GM10248 (cell line): ENCODE measurements at regions of chr5 and their contacts with region 1.

Region 1: GRCh38 chr5:150560401-150561193 is 52.7 kb downstream of the NDST1 start:
- DNase-seq: peak; percentile 80
- CTCF ChIP-seq: peak; percentile 80

Region 2: DNA sequence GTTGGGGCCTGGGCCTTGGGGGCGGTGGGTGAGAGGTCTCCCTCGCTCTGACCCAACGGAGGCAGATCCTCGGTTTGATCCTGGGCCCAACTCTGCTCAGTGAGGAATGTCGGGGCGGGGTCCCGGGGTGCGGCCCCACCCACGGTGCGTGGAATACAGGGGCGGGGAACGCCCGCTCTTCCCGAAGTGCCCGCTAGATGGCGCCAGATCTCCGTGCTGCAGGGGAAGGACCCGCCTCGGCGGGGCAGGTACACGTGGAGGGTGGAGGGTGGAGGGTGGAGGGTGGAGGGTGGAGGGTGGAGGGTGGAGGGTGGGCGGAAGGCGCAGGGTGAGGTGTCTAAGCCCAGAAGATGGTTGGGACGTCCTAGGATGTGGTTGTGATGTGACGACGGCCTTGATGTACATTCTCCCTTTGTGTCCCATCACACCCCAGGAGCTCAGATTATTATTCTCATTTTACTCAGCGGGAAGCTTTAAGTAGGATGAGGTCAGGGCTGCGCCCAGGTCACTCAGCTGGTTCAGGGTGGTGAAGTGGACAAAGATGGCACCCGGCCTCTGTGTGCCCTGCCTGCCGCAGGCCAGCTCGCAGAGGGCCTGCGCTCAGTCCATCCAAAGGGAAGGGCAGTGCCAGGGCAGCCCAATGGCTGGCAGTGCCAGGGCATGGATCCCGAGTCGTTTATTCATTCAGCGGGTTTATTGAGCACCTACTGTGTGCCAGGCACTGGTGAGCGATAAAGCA is 101.6 kb before region 1 on chr5:
- CTCF ChIA-PET with region 1: interaction called, 56 read pairs
- POLR2A ChIA-PET with region 1: no interaction called
- DNase-seq: peak; percentile 84
- CTCF ChIP-seq: peak; percentile 94

Region 3: DNA sequence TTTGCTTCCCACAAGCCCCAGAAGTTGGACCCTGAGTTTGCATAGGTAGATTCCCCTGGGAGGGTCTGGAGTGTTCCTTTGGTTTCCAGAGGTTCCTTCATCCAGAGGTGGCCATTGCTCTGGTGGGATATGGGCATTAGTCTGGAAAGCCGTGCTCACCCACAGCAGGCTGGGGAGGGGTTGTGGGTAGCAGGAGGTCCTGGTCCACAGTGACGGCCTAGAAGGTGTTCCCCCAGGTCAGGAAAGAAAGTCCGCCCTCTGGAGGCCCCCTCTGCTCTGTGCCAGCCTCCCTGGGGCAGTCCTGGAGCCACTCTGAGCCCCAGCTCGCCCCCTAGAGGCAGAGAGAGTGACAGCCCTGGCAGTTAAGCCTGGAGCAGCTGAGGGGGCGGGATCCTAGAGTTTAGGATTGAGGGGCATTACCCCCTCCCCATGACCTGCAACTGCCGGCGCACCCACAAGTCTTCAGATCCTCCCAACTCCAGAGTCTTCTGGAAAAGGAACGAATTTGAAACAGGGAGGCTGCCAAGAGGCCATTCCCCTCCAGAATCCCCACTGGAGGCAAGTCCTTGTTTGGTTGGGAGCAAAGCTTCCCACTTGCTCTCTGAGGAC is 15.9 kb before region 1 on chr5:
- CTCF ChIA-PET with region 1: interaction called, 35 read pairs
- POLR2A ChIA-PET with region 1: no interaction called
- DNase-seq: peak; percentile 95
- CTCF ChIP-seq: peak; percentile 98

Region 4: DNA sequence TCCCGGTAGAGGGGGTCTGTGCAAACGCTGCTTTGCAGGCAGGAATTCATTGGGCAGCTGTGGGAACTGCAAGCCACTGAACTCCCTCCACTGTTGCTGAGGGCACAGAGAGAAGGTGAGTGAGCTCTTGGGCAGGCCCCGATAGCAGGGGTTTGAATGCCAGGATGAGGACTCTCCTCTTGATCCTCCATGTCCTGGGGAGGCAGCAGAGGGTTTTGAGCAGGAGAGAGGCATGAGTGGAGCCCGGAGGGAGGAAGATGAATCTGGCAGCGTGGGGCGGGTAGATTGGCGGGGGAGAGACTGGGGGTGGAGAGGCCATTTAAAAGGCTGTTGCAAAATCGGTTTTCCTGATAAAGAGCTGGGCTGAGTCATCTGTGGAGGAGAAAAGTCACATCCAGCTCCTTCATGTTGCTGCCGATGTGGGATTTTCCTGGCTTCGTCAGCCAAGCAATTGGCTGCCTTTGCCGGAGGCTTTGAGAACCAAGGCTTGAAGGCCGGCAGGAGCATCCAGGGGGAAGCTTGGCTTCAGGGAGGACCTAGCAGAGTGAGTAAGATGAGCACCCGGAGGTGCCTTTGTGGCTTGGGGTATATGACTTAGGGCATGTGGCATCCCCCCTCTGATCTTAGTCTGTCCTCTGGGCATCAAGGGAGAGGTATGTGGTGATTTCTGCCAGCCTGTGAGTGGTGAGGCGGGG is 79.9 kb after region 1 on chr5 and contains the start of gene SYNPO:
- CTCF ChIA-PET with region 1: interaction called, 13 read pairs
- POLR2A ChIA-PET with region 1: no interaction called
- DNase-seq: no peak
- CTCF ChIP-seq: no peak

Region 5: GRCh38 chr5:150700594-150701293 is 140.1 kb after region 1 on chr5 and contains the start of gene RBM22:
- CTCF ChIA-PET with region 1: interaction called, 34 read pairs
- POLR2A ChIA-PET with region 1: no interaction called
- DNase-seq: peak; percentile 90
- CTCF ChIP-seq: peak; percentile 71

Region 6: DNA sequence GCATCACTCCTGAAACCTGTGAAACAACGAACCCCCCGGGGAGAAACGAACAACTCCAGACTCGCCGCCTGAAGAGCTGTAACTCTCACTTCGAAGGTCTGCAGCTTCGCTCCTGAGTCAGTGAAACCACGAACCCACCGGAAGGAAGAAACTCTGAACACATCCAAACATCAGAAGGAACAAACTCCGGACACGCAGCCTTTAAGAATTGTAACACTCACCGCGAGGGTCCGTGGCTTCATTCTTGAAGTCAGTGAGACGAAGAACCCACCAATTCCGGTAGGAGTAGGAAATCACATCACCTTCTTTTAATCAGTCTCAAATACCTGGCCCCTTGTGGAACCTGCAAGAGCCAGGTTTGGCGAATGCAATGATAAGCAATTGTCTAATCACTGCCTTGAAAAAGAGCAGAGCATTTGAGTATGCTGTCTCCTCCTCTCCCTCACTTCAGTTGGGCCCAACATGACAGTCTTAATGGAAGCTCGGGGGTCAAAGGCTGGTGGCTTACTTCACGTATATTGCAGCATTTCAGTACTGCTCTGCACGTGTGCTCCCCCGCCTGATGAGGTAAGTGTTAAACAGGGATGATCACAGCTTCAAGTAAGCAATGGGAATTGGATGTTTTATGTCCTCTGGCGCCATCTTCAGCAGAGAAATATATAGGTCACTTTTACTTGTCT is 286.2 kb after region 1 on chr5:
- CTCF ChIA-PET with region 1: interaction called, 94 read pairs
- POLR2A ChIA-PET with region 1: no interaction called
- DNase-seq: peak; percentile 77
- CTCF ChIP-seq: peak; percentile 66